HAP-1 (cell line): ENCODE measurements at regions of chr15 and their contacts with region 1.

Region 1: DNA sequence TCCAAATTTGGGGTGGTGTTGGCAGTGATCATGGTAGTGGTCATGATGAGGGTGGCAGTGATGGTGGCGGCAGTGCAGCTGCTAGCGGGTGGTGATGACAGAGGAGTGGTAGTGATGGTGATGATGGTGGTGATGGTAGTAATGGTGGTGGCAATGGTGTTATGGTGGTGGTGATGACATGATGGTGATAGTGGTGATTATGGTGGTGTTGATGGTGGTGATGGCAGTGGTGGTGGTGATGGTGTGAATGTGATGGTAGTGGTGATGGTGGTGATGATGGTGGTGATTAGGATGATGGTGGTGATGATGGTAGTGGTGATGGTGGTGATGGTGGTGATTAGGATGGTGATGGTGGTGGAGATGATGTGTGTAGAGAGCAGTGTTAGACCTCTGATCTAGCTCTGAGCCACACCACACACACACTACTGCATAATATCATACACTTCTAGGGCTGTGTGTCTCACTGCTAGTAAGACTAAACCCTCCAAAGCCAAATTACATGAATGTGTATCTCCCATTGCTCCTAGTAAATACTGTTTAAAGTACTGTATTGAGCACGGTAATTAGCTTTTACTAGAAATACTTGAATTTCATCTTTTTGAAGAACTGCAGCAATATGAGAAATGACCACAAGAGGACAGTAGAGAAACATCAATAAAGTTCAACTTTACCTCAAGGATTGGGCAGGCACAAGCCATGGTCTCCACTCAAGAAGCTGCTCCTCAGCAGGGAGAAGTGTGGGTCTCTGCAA is 28.8 kb downstream of the TMED3 start:
- DNase-seq: peak; percentile 47 to 75
- H3K4me3 ChIP-seq: no peak overlapping the region
- H3K4me1 ChIP-seq: no peaks in the 10 kb centered on the region
- H3K27me3 ChIP-seq: no peaks in the 10 kb centered on the region

Region 2: DNA sequence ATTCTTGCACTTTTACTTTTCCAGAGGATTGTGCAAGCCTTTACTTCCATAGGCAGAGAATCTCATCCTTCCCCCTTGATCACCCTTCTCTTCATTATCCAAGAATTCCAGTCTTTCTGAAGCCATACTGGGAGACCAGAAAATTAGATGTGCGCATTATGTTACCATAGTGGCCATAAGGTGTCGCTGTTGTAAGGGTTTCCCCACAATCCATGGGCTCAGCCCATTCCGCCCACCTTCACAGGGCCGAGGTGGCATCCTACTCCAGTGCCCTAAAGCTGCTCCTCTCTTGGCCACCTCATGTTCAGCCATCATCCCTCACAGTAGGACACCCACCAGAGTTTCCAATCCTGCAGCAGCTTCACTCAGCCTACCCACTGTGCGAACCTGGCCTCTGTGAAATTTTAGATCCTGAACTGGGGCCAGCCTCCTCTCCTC is 429.9 kb before region 1 on chr15:
- in situ Hi-C with region 1: no loop called
- DNase-seq: peak; percentile 68 to 84
- H3K4me3 ChIP-seq: no peak overlapping the region
- H3K4me1 ChIP-seq: no peaks in the 10 kb centered on the region; the same call in 1 of the 2 replicates
- H3K27me3 ChIP-seq: no peaks in the 10 kb centered on the region

Region 3: GRCh38 chr15:79849784-79850183 is 510.0 kb after region 1 on chr15:
- in situ Hi-C with region 1: loop called (anchors 10 kb)
- DNase-seq: peak in 1 of 2 experiments; percentile 69
- H3K4me3 ChIP-seq: no peak overlapping the region
- H3K4me1 ChIP-seq: peaks cover 5% of the 10 kb centered on the region
- H3K27me3 ChIP-seq: no peaks in the 10 kb centered on the region

Region 4: DNA sequence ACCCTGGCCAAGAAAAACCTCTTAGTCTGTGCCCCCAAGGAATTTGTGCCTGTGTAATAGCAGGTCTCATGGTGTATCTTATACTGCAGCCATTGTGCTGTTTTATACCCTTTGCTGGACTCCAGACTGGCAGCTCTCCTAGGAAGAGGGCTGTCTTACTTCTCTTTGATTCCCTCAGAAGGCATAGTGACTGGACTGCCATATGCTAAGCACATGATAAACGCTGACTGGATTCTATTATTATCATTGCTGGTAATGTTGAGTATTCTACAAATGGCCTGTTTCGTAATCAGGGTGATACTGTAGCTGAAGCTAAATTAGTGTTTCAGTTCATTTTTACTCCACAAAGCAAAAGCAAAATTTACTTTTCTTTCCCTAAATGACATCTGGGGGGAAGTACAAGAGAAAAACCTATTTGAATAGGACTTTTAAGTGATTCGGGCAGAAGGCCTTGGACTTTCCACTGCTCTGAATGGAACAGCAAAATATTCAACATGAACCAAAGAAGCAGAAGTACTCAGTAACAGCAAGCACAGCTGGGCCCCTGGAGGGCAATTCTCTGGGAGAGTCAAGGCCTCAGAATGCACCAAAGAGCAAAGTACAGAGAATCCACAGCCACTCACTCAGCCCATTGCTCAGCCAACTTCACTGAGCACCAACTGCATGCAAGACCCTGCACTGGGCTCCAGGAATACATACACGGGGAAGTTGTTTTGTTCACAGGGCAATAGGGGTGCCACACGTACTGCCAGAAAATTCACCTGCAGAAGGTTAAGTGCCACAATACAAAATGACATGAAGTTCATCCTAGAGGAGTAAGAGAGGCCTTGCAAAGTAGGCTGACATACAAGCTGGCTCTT is 639.1 kb after region 1 on chr15:
- in situ Hi-C with region 1: loop called (anchors 25 kb)
- DNase-seq: no peak
- H3K4me3 ChIP-seq: no peak overlapping the region
- H3K4me1 ChIP-seq: no peaks in the 10 kb centered on the region
- H3K27me3 ChIP-seq: no peaks in the 10 kb centered on the region

Region 5: DNA sequence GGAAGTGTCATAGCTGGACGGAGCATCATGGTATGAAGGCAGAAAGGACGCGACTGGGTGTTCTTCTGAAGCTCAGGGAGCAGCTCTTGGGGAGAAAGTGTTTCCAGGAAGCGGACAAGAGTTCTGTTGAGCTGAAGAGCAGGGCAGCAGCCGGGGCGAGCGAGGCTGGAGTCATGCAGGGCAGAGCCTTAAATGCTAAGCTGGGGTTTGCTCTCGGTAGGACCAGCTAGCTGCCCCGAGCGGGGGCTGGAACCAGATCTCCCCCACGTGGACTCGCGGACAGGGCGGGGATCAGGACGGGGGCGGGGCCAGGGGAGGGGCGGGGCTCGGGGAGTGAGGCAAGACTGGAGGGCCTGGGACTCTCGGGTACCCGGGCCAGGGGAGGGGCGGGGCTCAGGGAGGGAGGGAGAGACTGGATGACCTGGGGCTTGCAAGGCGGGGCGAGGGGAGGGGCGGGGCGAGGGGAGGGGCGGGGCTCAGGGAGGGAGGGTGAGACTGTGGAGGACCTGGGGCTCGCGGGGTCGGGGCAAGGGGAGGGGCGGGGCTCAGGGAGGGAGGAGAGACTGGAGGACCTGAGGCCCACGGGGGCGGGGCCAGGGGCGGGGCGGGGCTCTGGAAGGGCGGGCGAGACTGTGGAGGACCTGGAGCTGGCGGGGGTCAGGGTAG is 812.6 kb after region 1 on chr15:
- in situ Hi-C with region 1: loop called (anchors 25 kb)
- DNase-seq: peak; percentile 99 to 100
- H3K4me3 ChIP-seq: peak overlapping the region; percentile 70
- H3K4me1 ChIP-seq: peaks cover 8% of the 10 kb centered on the region
- H3K27me3 ChIP-seq: no peaks in the 10 kb centered on the region